ENCODE measurements at regions of chr11 and their contacts with region 1.

Region 1: GRCh38 chr11:2992234-2992996 is at the start of gene NAP1L4:
- DNase-seq: peak; percentile 93
- H3K4me3 ChIP-seq: peak within 1 kb of the TSS; percentile 76 to 89 (median 86)
- H3K27ac ChIP-seq: peak within 1 kb of the TSS; percentile 90
- H3K4me1 ChIP-seq: peaks cover 6 to 18% (median 8%) of the 10 kb centered on the region in 4 experiments
- H3K27me3 ChIP-seq: no peaks in the 10 kb centered on the region
- CTCF ChIP-seq: no peak; a peak in 1 of 4 replicates
- EP300 ChIP-seq: no peak
- POLR2A ChIP-seq: peak; percentile 60 to 82
- RAD21 ChIP-seq: no peak
- total RNA-seq, gene NAP1L4: 190 and 194 TPM in 2 replicates

Region 2: GRCh38 chr11:2963112-2963817 is 29.1 kb before region 1 on chr11:
- CTCF ChIA-PET with region 1: interaction called, 7 read pairs
- POLR2A ChIA-PET with region 1: interaction called, 12 read pairs
- DNase-seq: no peak
- H3K4me3 ChIP-seq: no peak overlapping the region
- H3K27ac ChIP-seq: no peak overlapping the region
- H3K4me1 ChIP-seq: peaks cover 0 to 5% (median 3%) of the 10 kb centered on the region in 4 experiments; a peak in 6 of 7 replicates
- H3K27me3 ChIP-seq: no peaks in the 10 kb centered on the region
- CTCF ChIP-seq: no peak
- EP300 ChIP-seq: no peak
- POLR2A ChIP-seq: no peak
- RAD21 ChIP-seq: no peak

Region 3: GRCh38 chr11:2975594-2975993 is 16.8 kb before region 1 on chr11:
- CTCF ChIA-PET with region 1: interaction called, 18 read pairs
- POLR2A ChIA-PET with region 1: interaction called, 28 read pairs
- DNase-seq: no peak
- H3K4me3 ChIP-seq: no peak overlapping the region
- H3K27ac ChIP-seq: no peak overlapping the region
- H3K4me1 ChIP-seq: no peaks in the 10 kb centered on the region
- H3K27me3 ChIP-seq: no peaks in the 10 kb centered on the region
- CTCF ChIP-seq: peak; percentile 46 to 60 (median 51)
- EP300 ChIP-seq: no peak
- POLR2A ChIP-seq: no peak
- RAD21 ChIP-seq: peak; percentile 50 to 58

Region 4: DNA sequence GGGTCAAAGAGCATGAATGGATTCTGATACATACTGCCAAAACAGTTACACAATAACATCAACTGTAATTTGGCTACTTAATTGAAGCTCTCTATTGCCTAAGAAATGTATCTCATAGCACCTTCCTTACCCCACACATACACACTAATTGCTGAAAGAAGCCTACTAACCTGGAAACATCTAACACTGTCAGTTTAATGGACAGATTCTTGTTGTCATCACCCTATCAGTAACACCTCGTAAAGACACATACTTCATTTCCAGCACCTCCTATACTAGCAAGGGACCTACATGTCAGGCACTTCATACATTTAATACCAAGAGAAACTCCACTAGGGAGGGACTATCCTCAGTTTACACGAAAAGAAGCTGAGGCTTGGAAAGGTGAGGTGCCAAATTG is 10.2 kb before region 1 on chr11:
- CTCF ChIA-PET with region 1: interaction called, 4 read pairs
- POLR2A ChIA-PET with region 1: interaction called, 28 read pairs
- DNase-seq: no peak
- H3K4me3 ChIP-seq: no peak overlapping the region
- H3K27ac ChIP-seq: no peak overlapping the region
- H3K4me1 ChIP-seq: no peaks in the 10 kb centered on the region
- H3K27me3 ChIP-seq: no peaks in the 10 kb centered on the region
- CTCF ChIP-seq: no peak
- EP300 ChIP-seq: no peak
- POLR2A ChIP-seq: no peak
- RAD21 ChIP-seq: no peak

Region 5: DNA sequence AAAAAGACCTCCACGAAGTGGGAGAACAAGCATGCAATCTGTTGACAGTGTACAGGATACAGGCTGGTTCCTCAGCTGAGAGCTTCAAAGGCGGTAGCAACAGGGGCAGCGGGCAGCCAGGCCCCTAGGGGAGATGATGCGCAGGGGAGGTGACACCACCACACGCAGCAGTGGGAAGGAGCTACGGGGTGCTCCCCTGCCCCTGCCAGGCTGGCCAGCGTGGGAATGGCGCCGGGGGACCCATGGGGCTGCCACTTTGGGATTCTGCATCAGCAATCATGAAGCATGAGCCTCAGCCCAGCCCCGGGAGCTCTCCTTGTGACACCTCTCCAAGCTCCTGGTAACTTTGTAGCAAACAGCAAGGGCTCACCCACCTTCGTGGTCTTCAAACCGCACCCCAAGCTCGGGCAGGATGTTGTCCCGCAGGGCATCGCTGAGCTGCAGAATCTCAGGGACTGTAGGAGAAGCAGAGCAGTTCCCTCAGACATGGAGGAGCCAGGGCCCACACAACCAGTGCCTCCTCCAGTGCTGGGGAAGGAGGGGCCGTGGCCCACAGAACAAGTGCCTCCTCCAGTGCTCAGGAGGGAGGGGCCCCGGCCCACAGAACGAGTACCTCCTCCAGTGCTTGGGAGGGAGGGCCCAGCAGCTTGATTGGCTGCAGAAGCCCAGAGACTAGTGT is 14.2 kb after region 1 on chr11:
- CTCF ChIA-PET with region 1: interaction called, 14 read pairs
- POLR2A ChIA-PET with region 1: interaction called, 11 read pairs
- DNase-seq: no peak
- H3K4me3 ChIP-seq: no peak overlapping the region
- H3K27ac ChIP-seq: no peak overlapping the region
- H3K4me1 ChIP-seq: no peaks in the 10 kb centered on the region
- H3K27me3 ChIP-seq: no peaks in the 10 kb centered on the region
- CTCF ChIP-seq: no peak
- EP300 ChIP-seq: no peak
- POLR2A ChIP-seq: no peak
- RAD21 ChIP-seq: no peak

Measured in H1 (cell line).